ENCODE measurements at regions of chr16 and their contacts with region 1.

Region 1: GRCh38 chr16:87950765-87951549 is at the start of gene BANP:
- DNase-seq: peak; percentile 98 to 99
- ATAC-seq: peak; percentile 93
- H3K4me3 ChIP-seq: peak within 1 kb of the TSS; percentile 80 to 83 (median 82)
- H3K27ac ChIP-seq: peak within 1 kb of the TSS; percentile 84 to 96 (median 92)
- H3K4me1 ChIP-seq: peaks cover 22 to 35% of the 10 kb centered on the region in 2 donors
- H3K27me3 ChIP-seq: no peaks in the 10 kb centered on the region
- CTCF ChIP-seq: peak; percentile 46 to 74 (median 65)
- POLR2A ChIP-seq: peak in 1 of 2 donors; percentile 85
- total RNA-seq, gene BANP: 7.0 to 20.6 (median 16.1) TPM

Region 2: GRCh38 chr16:87765776-87766484 is 185.0 kb before region 1 on chr16 and contains the start of gene KLHDC4:
- in situ Hi-C with region 1: no loop called
- intact Hi-C with region 1: loop called (anchors 5 kb)
- DNase-seq: peak; percentile 83 to 86
- ATAC-seq: peak; percentile 95
- H3K4me3 ChIP-seq: peak within 1 kb of the TSS; percentile 86 to 98 (median 94)
- H3K27ac ChIP-seq: peak within 1 kb of the TSS; percentile 88 to 95 (median 90)
- H3K4me1 ChIP-seq: peaks cover 5 to 8% of the 10 kb centered on the region in 2 donors
- H3K27me3 ChIP-seq: no peaks in the 10 kb centered on the region
- CTCF ChIP-seq: no peak
- POLR2A ChIP-seq: peak; percentile 68 to 85
- total RNA-seq, gene KLHDC4: 8.2 to 12.7 (median 10.4) TPM

Region 3: DNA sequence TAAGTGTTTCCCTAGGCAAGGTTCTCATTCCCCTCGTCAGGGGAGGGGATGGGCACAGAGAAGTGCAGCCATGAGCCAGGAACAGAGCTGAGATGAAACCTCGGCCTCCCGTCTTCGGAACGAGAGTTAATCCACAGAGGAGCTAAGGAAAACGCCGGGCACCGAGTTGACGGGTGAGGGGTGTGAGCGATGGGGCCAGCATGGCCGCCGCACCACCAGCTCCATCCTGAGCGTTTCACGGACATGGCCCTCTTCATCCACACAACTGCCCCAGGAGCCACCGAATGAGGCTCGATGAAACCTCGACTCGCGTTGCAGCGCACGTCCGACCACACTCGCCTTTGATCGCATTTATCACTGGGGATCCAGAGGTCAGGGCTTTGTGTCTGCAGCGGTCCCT is 36.1 kb before region 1 on chr16:
- in situ Hi-C with region 1: no loop called
- intact Hi-C with region 1: loop called (anchors 2 kb)
- DNase-seq: no peak
- ATAC-seq: no peak
- H3K4me3 ChIP-seq: no peak overlapping the region
- H3K27ac ChIP-seq: no peak overlapping the region
- H3K4me1 ChIP-seq: peaks cover 24 to 32% of the 10 kb centered on the region in 2 donors
- H3K27me3 ChIP-seq: no peaks in the 10 kb centered on the region
- CTCF ChIP-seq: no peak
- POLR2A ChIP-seq: no peak

Region 4: DNA sequence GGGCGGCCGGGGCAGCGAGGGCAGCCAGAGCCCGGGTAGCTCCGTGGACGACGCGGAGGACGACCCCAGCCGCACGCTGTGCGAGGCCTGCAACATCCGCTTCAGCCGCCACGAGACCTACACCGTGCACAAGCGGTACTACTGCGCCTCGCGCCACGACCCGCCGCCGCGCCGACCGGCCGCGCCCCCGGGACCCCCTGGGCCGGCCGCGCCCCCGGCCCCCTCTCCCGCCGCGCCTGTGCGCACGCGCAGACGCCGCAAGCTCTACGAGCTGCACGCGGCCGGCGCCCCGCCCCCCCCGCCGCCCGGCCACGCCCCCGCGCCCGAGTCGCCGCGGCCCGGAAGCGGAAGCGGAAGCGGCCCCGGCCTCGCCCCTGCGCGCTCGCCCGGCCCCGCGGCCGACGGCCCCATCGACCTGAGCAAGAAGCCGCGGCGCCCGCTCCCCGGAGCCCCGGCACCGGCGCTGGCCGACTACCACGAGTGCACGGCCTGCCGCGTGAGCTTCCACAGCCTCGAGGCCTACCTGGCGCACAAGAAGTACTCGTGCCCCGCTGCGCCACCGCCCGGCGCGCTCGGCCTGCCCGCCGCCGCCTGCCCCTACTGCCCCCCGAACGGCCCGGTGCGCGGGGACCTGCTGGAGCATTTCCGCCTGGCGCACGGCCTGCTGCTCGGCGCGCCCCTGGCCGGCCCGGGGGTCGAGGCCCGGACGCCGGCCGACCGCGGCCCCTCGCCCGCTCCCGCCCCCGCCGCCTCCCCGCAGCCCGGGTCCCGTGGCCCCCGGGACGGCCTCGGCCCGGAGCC is 583.2 kb after region 1 on chr16:
- in situ Hi-C with region 1: no loop called
- intact Hi-C with region 1: loop called (anchors 1 kb)
- DNase-seq: peak; percentile 42 to 67
- ATAC-seq: peak; percentile 90
- H3K4me3 ChIP-seq: peak overlapping the region; percentile 45 to 79 (median 66)
- H3K27ac ChIP-seq: peak overlapping the region; percentile 62 to 88 (median 84)
- H3K4me1 ChIP-seq: peaks cover 7 to 25% of the 10 kb centered on the region in 2 donors
- H3K27me3 ChIP-seq: peaks cover 0 to 3% (median 2%) of the 10 kb centered on the region in 3 donors
- CTCF ChIP-seq: peak in 1 of 5 experiments; percentile 19
- POLR2A ChIP-seq: peak; percentile 68 to 80